Naive thymus-derived CD8-positive, alpha-beta T cell (primary cell): ENCODE measurements at regions of chr6 and their contacts with region 1.

Region 1: DNA sequence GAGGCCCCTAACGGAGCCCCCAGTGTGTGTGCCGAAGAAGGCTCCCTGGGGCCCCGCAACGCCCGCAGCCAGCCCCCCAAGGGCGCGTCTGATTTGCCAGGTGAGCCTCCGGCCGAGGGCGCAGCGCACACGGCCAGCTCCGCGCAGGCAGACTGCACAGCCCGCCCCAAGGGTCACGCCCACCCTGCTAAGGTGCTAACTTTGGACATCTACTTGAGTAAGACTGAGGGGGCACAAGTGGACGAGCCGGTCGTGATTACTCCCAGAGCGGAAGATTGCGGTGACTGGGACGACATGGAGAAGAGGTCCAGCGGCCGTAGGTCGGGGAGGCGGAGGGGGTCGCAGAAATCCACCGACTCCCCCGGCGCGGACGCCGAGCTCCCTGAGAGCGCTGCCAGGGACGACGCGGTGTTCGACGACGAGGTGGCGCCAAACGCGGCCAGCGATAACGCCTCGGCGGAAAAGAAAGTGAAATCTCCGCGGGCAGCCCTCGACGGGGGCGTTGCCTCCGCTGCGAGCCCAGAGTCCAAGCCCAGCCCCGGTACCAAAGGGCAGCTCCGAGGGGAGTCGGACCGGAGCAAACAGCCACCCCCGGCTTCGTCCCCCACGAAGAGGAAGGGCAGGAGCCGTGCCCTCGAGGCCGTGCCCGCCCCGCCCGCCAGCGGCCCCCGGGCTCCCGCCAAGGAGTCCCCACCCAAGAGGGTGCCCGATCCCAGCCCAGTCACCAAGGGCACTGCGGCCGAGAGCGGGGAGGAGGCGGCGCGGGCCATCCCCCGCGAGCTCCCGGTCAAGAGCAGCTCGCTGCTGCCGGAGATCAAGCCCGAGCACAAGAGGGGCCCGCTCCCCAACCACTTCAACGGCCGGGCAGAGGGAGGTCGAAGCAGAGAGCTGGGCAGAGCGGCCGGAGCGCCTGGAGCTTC is 117.0 kb downstream of the RTN4IP1 start:
- DNase-seq: peak; percentile 69 to 87 (median 78)
- ATAC-seq: peak; percentile 66 to 69
- H3K4me3 Mint-ChIP-seq: peak overlapping the region; percentile 89 to 100 (median 97)
- H3K27ac Mint-ChIP-seq: peak overlapping the region; percentile 90 to 99 (median 97)
- H3K4me1 Mint-ChIP-seq: peaks cover 20 to 69% (median 53%) of the 10 kb centered on the region in 4 donors
- H3K27me3 Mint-ChIP-seq: no peaks in the 10 kb centered on the region

Region 2: DNA sequence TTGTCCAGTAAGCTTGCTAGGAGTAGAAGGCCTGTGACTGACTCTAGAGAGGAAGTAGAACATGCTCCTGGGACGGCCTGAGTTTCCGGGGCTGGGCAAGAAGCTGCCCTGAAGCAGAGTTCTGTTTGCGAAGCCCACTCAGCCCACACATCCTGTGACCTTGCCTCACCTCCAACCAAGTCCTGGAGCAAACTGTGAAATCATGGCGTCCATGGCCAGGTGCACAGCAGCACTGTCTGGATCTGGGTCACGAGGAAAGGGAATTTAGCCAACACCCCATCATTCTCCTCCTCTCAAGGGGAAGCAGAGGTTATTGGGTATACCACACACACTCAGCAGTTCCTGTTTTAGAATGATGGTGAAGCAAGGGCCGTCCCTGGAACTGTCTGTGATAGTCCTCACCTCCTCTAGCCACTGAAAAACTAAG is 64.3 kb before region 1 on chr6:
- POLR2A ChIA-PET with region 1: interaction called, 11 read pairs
- DNase-seq: peak in 8 of 10 donors; percentile 3 to 64 (median 28)
- ATAC-seq: peak; percentile 68 to 79
- H3K4me3 Mint-ChIP-seq: peak overlapping the region; percentile 9 to 72 (median 48)
- H3K27ac Mint-ChIP-seq: peak overlapping the region; percentile 9 to 91 (median 82)
- H3K4me1 Mint-ChIP-seq: peaks cover 4 to 16% (median 15%) of the 10 kb centered on the region in 4 donors
- H3K27me3 Mint-ChIP-seq: peaks cover 0 to 3% (median 2%) of the 10 kb centered on the region in 5 donors

Region 3: DNA sequence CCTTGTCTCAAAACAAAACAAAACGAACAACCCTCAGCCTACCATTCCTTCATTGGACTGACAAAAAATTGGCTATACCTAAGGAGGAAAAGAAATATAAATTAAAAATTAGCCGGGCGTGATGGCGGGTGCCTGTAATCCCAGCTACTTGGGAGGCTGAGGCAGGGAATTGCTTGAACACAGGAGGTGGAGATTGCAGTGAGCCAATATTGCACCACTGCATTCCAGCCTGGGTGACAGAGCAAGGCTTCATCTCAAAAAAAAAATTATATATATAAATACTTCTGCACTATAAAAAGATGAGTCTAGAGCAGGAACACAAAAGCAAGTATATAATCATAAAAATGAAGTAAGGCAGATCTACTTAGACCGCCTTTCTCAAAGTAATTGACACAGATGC is 42.0 kb before region 1 on chr6:
- POLR2A ChIA-PET with region 1: no interaction called
- DNase-seq: no peak
- ATAC-seq: no peak
- H3K4me3 Mint-ChIP-seq: no peak overlapping the region
- H3K27ac Mint-ChIP-seq: no peak overlapping the region
- H3K4me1 Mint-ChIP-seq: no peaks in the 10 kb centered on the region
- H3K27me3 Mint-ChIP-seq: peaks cover 0 to 9% (median 4%) of the 10 kb centered on the region in 5 donors

Region 4: GRCh38 chr6:106539936-106540335 is 27.6 kb after region 1 on chr6:
- POLR2A ChIA-PET with region 1: interaction called, 11 read pairs
- DNase-seq: no peak
- ATAC-seq: no peak
- H3K4me3 Mint-ChIP-seq: peak overlapping the region in 1 of 10 donors; percentile 22
- H3K27ac Mint-ChIP-seq: peak overlapping the region in 8 of 10 donors; percentile 8 to 82 (median 66)
- H3K4me1 Mint-ChIP-seq: peaks cover 19 to 57% (median 40%) of the 10 kb centered on the region in 4 donors
- H3K27me3 Mint-ChIP-seq: no peaks in the 10 kb centered on the region

Region 5: DNA sequence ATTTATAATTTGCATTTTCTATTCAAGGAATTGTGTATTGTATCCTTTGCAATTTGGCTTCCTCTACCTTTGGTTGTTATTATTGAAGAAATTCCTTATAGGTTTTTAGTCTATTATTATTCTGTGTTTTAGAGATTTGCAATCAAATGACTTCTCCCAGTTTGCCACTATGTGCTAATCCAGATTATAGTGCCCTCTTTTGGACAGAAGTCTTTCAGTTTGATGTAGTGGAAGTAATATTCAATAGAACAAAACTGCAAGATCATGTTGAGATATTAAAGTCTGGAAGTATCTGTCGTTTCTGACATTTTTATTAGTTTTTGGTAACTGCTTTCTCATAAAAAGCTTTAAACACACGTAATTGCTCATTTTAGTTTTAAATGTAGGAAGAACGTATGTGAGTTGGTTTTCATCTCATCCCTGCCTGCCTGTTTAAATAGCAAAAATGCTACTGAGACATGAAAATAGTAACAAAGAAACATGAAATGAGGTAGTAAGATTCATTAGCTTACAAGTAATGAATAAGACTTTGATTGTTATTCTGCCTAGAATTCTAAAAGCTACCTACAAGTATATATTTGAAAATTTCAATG is 44.2 kb after region 1 on chr6:
- POLR2A ChIA-PET with region 1: interaction called, 20 read pairs
- DNase-seq: peak in 3 of 10 donors; percentile 50 to 59 (median 57)
- ATAC-seq: peak; percentile 68 to 69
- H3K4me3 Mint-ChIP-seq: no peak overlapping the region
- H3K27ac Mint-ChIP-seq: peak overlapping the region in 3 of 10 donors; percentile 6 to 35 (median 11)
- H3K4me1 Mint-ChIP-seq: peaks cover 0 to 7% (median under 1%) of the 10 kb centered on the region in 4 donors
- H3K27me3 Mint-ChIP-seq: no peaks in the 10 kb centered on the region

Region 6: DNA sequence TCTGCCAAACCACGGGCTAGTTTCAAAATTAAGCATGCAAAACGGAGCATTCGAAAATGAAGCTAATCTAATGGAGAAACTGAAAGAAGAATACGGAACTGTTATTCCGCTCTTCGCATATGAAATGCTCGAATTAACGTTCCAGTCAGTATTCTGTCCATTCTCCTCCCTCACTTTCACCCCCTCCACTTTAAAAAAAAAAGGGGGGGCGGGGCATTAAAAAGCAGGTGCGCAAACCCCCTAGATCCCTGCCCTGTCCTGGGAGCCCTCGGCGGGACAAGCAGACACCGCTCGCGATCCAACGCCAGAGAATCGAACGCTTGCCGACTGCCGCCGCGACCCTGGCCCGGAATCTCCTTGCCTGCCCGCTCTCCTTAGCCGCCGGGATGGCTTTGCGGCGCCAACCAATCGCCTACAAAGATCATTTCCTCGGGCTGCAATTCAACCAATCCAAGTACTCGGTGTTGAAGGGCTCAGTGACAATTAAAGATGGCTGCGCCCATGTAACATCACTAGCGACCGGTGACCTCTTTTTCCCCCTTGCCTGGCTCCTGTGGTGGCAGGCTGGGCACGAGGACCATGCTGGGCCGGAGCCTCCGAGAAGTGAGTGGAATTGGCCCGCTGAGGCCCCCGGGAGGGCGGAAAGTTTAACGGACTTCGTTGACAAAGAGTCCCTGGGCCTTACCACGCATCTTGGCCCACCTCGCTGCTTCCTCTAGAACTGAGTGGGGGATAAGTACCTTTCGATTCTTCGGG is 117.0 kb after region 1 on chr6 and contains the starts of genes QRSL1 and RTN4IP1:
- POLR2A ChIA-PET with region 1: no interaction called
- DNase-seq: peak; percentile 67 to 96 (median 88)
- ATAC-seq: peak; percentile 94 to 95
- H3K4me3 Mint-ChIP-seq: peak within 1 kb of the TSS; percentile 94 to 99 (median 98)
- H3K27ac Mint-ChIP-seq: peak within 1 kb of the TSS; percentile 97 to 99 (median 98)
- H3K4me1 Mint-ChIP-seq: peaks cover 18 to 66% (median 43%) of the 10 kb centered on the region in 4 donors
- H3K27me3 Mint-ChIP-seq: peaks cover 0 to 2% (median 0%) of the 10 kb centered on the region in 5 donors
- polyA plus RNA-seq, gene QRSL1: 11.4 to 11.6 (median 11.6) TPM
- polyA plus RNA-seq, gene RTN4IP1: 4.4 to 7.8 (median 6.0) TPM